Posterior vena cava (tissue), 2 donors: ENCODE measurements at regions of chr3 and their contacts with region 1.

Region 1: DNA sequence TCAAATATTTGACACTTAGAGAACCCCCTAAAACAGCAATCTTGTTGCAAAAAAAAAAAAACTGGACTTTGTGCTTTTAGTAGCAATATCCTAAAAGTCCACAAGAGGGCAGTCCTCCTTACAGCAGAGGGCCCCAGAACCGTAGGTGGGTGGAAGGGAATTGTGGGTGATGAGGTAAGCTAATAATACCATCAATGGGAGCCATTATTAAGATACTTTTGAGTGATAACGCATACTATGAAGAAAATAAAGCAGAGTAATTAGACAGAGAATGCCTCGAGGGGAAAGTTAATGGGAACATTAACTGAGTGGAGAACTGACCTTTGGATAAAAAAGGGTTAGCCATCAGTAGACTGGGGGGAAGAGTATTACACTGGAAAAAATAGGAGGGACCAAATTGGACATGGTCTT is 229.9 kb downstream of the THRB start:
- DNase-seq: no peak

Region 2: GRCh38 chr3:24237971-24238767 is 26.6 kb before region 1 on chr3:
- intact Hi-C with region 1: no loop called
- DNase-seq: no peak

Region 3: DNA sequence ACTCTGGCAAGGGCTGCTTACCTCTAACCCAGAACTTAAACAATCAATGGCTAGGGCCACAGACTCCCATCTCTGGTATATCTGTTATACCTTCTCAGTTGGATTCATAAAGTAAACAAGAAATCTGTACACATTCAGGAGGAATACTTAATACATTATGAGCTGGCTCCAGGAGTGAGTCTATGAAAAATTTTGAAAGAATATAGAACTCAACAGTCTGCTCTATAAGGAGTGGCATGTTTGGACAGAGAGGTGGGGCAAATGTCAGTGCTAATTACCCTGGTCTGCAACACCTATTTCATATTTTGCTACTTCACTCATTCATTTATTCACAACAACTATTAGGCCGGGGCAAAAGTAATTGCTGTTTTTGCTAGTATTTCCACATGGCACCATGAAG is 15.2 kb before region 1 on chr3:
- intact Hi-C with region 1: no loop called
- DNase-seq: no peak

Region 4: GRCh38 chr3:24494618-24495325 is 230.0 kb after region 1 on chr3 and contains the start of gene THRB:
- intact Hi-C with region 1: loop called in 1 of 2 experiments (anchors 10 kb)
- DNase-seq: peak; percentile 93
- total RNA-seq, gene THRB: 25.0 to 32.5 TPM